WTC11 (cell line): ENCODE measurements at regions of chr3 and their contacts with region 1.

Region 1: DNA sequence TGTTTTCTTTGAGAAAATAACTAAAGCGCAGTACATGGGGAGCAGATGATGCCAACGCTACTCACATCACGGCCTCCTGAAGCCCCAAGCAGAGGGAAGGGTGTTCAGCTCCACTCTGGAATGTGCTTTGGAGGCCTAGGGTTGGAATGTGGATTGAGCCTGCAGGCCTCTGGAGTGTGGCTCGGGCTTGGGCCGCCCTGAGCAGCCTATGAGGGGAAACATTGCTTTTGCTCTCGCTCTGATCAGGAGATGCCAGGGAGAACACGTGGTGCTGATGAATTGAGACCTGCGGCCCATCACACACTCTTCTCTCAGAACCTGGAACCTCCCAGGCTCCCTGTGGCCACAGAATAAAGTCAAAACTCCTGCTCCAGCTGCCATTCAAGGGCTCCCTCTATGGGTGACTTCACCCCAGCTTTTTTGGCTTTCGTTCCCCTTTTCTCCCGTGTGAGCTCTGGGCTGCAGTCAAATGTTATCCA is 23.3 kb downstream of the CCDC13 start:
- DNase-seq: peak; percentile 42
- ATAC-seq: peak; percentile 87
- H3K4me3 Mint-ChIP-seq: no peak overlapping the region
- H3K27ac Mint-ChIP-seq: peak overlapping the region; percentile 65; the same call in 1 of the 2 replicates
- H3K4me1 Mint-ChIP-seq: peaks cover 22% of the 10 kb centered on the region
- H3K27me3 Mint-ChIP-seq: no peaks in the 10 kb centered on the region; the same call in 1 of the 2 replicates
- CTCF ChIP-seq: peak; percentile 48; the same call in 1 of the 2 replicates

Region 2: DNA sequence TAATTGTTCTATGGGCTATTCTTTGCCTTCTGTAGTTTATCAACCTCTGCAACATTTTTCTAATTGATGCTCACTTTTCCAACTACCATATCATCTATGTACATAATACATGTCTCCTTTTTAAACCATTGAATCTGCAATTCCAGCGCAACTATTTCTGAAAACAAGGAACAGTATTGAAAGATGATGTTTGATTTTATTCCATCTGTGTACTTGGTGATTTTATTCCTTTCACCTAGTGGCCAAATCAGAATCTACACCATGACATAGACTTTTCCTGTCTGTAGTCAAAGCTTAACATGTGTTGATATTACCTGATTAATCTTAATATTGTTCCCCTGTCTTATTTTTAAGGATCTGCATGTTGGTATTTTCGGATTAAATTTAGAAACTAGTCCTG is 136.3 kb before region 1 on chr3:
- CTCF ChIA-PET with region 1: interaction called, 10 read pairs
- POLR2A ChIA-PET with region 1: no interaction called
- DNase-seq: no peak
- ATAC-seq: peak; percentile 39; the same call in 1 of the 2 replicates
- H3K4me3 Mint-ChIP-seq: no peak overlapping the region
- H3K27ac Mint-ChIP-seq: peak overlapping the region; percentile 1; the same call in 1 of the 2 replicates
- H3K4me1 Mint-ChIP-seq: peaks cover 18% of the 10 kb centered on the region
- H3K27me3 Mint-ChIP-seq: no peaks in the 10 kb centered on the region
- CTCF ChIP-seq: 0 out of 2 replicates have a peak, but pooled peaks have one; percentile 15

Region 3: DNA sequence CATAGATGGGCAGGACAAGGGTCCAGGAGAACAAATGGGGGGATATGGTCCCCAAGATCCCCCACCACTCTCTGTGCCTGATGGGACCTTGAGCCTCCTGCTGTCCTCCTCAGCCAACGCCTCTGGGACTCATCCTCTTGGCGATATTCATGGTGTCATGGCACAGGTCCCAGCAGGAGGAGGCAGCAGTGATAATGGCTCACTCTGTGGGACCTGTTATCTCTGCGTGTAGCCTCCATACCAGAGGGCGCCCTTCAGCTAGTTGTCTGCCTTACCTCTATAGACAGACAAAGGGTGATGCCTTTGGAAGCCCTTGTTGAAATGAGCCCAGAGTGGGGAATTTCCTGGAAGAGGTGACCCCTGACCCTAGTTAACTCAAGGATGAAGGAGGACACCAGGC is 88.9 kb before region 1 on chr3:
- CTCF ChIA-PET with region 1: interaction called, 24 read pairs
- POLR2A ChIA-PET with region 1: no interaction called
- DNase-seq: no peak
- ATAC-seq: peak; percentile 57
- H3K4me3 Mint-ChIP-seq: no peak overlapping the region
- H3K27ac Mint-ChIP-seq: no peak overlapping the region
- H3K4me1 Mint-ChIP-seq: peaks cover 10% of the 10 kb centered on the region; the same call in 1 of the 2 replicates
- H3K27me3 Mint-ChIP-seq: no peaks in the 10 kb centered on the region
- CTCF ChIP-seq: no peak

Region 4: DNA sequence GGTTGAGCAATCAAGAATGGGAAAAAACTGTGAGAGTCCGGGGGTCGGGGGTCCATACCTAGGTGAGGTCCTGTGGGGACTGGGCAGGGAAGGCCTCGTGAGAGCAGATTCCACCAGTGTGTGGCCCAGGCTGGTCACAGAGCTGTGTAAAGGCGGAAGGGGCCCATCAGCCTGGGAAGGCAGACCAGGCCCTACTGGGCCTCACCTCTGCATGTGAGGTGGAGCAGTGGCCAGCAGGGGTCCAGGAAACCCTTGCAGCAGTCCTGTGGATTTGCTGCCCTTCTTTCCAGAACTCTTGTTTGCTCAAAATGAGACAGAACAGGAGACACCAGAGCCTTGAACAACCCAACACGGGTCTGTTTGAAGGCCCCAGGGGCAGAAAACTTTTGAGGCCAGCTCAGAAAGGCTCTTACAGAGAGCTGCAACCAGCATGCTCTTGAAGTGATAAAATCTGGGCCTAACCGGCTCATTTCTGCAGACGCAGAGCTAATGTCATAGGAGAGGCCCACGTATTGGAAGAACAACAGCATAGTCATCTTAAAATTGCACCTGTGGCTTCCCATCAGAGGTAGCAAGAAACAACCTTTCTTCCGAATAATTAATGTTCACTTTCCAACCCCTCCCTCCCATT is 16.8 kb before region 1 on chr3:
- CTCF ChIA-PET with region 1: interaction called, 20 read pairs
- POLR2A ChIA-PET with region 1: no interaction called
- DNase-seq: no peak
- ATAC-seq: peak; percentile 21
- H3K4me3 Mint-ChIP-seq: no peak overlapping the region
- H3K27ac Mint-ChIP-seq: no peak overlapping the region
- H3K4me1 Mint-ChIP-seq: peaks cover 48% of the 10 kb centered on the region
- H3K27me3 Mint-ChIP-seq: peaks cover 11% of the 10 kb centered on the region; the same call in 1 of the 2 replicates
- CTCF ChIP-seq: no peak

Region 5: DNA sequence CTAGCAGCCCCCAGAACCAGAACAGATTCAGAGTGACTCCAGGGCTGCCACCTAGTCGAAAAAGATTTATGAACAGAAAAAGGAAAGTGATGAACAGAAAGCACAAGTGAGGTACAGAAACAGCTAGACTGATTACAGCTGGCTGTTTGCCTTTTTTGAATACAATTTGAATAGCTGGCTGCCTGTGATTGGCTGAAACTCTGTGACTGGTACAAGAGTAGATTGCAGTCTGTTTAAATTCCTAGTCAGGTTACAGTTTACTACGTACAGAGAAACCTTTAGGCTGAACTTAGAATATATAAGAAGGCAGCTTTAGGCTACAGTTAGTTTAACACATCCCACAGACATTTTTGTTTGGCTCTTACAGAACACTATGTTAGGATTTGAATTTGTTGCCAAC is 13.2 kb after region 1 on chr3:
- CTCF ChIA-PET with region 1: interaction called, 49 read pairs
- POLR2A ChIA-PET with region 1: no interaction called
- DNase-seq: no peak
- ATAC-seq: no peak
- H3K4me3 Mint-ChIP-seq: no peak overlapping the region
- H3K27ac Mint-ChIP-seq: no peak overlapping the region
- H3K4me1 Mint-ChIP-seq: peaks cover 34% of the 10 kb centered on the region
- H3K27me3 Mint-ChIP-seq: no peaks in the 10 kb centered on the region; the same call in 1 of the 2 replicates
- CTCF ChIP-seq: no peak

Region 6: GRCh38 chr3:42880601-42881451 is 131.0 kb after region 1 on chr3:
- CTCF ChIA-PET with region 1: interaction called, 14 read pairs
- POLR2A ChIA-PET with region 1: no interaction called
- DNase-seq: peak; percentile 91
- ATAC-seq: peak; percentile 97
- H3K4me3 Mint-ChIP-seq: peak overlapping the region; percentile 85
- H3K27ac Mint-ChIP-seq: 0 out of 2 replicates have a peak overlapping the region, but pooled peaks have one; percentile 77
- H3K4me1 Mint-ChIP-seq: peaks cover 25% of the 10 kb centered on the region
- H3K27me3 Mint-ChIP-seq: peaks cover 7% of the 10 kb centered on the region
- CTCF ChIP-seq: peak; percentile 57; the same call in 1 of the 2 replicates